IMR-90 (cell line): ENCODE measurements at regions of chr2 and their contacts with region 1.

Region 1: DNA sequence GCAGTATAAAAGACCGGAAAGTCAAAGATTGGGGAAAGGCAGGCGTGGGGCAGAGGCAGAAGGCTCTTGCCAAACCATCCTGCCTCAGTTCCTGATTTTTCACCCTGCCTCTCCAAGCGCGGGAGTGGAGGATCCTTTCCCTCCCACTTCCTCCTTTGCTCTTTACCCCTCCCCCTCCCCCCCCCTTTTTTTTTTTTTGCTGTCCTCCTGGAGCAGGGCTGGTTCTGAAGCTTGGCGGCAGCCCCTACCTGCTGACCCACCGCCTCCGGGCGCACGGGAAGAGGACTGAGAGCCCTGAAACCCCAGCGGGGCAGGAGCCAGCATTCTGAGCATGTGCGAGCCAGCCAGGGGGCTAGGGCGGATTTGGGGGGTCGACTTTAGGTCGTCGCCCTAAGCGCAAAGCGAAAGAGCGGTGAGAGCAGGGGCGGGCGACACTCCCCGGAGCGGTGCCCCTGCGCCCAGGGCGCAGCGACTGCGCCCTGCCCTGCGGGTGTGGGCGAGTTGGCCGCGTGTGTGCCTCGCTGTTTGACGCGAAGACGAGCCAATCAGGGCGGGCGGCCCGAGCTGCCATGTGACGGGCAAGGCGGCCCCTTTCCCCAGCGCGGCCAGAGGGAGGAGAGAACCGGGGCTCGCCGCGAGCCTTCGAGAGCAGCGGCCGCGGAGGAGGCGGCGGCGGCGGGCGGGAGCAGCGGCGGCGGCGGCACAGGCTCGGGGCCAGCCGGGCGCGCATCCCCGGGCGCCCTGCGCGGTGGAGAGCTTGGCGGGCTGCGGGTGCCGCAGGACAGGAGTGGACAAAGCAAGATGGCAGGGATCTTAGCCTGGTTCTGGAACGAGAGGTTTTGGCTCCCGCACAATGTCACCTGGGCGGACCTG is at the start of gene CERS6:
- DNase-seq: peak; percentile 90
- ATAC-seq: peak; percentile 99
- H3K4me3 ChIP-seq: peak within 1 kb of the TSS; percentile 83
- H3K27ac ChIP-seq: peak within 1 kb of the TSS; percentile 52
- H3K4me1 ChIP-seq: no peaks in the 10 kb centered on the region
- H3K27me3 ChIP-seq: peaks cover 2% of the 10 kb centered on the region; the same call in 1 of the 2 replicates
- CTCF ChIP-seq: no peak
- POLR2A ChIP-seq: peak; percentile 58; the same call in 1 of the 2 replicates
- RAD21 ChIP-seq: no peak
- total RNA-seq, gene CERS6: 5.7 and 9.4 TPM in 2 replicates

Region 2: GRCh38 chr2:168583064-168583709 is 127.3 kb after region 1 on chr2:
- CTCF ChIA-PET with region 1: no interaction called
- POLR2A ChIA-PET with region 1: no interaction called
- dilution Hi-C with region 1: no loop called
- in situ Hi-C with region 1: no loop called
- intact Hi-C with region 1: loop called (anchors 5 kb)
- DNase-seq: peak; percentile 43
- ATAC-seq: peak; percentile 43; the same call in 1 of the 2 replicates
- H3K4me3 ChIP-seq: no peak overlapping the region
- H3K27ac ChIP-seq: no peak overlapping the region; the same call in 1 of the 2 replicates
- H3K4me1 ChIP-seq: peaks cover 4% of the 10 kb centered on the region; the same call in 1 of the 2 replicates
- H3K27me3 ChIP-seq: no peaks in the 10 kb centered on the region
- CTCF ChIP-seq: no peak
- POLR2A ChIP-seq: no peak
- RAD21 ChIP-seq: no peak

Region 3: DNA sequence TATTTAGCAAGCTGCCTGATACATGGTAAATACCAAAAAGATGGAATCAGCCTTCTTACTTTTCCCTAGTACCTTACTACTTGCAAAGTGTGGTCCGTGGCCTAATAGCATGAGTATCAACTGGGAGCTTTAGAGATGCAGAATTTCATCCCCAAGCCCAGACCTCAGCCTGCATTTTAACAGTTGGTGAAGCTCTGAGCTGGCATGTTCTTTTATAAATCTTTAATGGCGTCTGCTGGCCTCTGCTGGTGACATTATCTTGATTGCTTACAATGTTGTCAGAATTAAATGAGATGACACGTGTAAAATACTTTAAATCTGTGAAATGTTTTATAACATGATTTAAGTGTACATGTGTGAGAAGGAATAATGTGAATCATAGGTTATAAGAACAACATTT is 231.4 kb after region 1 on chr2:
- CTCF ChIA-PET with region 1: no interaction called
- POLR2A ChIA-PET with region 1: no interaction called
- dilution Hi-C with region 1: no loop called
- in situ Hi-C with region 1: no loop called
- intact Hi-C with region 1: loop called (anchors 5 kb)
- DNase-seq: peak; percentile 2
- ATAC-seq: peak; percentile 56
- H3K4me3 ChIP-seq: no peak overlapping the region
- H3K27ac ChIP-seq: no peak overlapping the region
- H3K4me1 ChIP-seq: peaks cover 6% of the 10 kb centered on the region
- H3K27me3 ChIP-seq: no peaks in the 10 kb centered on the region
- CTCF ChIP-seq: no peak
- POLR2A ChIP-seq: no peak
- RAD21 ChIP-seq: peak; percentile 23; the same call in 1 of the 2 replicates

Region 4: DNA sequence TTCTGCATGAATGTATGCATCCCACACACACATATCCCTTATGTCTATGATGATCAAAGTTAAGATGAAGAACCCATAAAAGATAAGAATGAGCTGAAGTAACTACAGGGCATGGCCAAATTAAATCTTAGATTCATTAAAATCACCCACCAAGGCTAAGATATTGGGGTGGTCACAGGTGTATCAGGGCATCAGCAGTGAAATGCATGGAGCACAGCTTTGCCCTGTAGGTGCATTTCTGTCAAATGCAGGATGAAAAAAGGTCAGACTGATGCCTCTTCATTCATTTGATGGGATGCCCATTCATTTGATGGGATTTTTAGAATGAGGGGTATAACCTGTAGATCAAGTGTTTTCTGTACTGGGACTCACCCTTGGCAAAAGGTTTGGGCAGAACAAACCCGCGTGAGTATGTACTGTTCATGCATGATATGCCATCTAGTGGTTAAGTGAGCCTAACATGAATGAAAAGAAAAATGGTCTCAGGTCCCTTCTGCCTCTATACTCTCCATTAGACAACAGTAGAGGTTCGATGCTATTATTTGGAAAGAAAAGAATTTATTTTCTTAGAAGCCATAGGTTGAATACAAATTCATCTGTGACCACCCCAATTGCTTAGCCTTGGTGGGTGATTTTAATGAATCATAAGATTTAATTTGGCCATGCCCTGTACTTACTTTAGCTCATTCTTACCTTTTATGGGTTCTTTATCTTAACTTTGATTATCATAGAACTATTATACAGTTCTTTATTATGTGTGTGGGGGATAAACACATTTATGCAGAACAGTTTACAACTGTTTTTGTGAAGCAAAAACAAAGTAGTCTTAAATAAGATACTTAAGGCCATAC is 303.3 kb after region 1 on chr2:
- CTCF ChIA-PET with region 1: no interaction called
- POLR2A ChIA-PET with region 1: no interaction called
- dilution Hi-C with region 1: no loop called
- in situ Hi-C with region 1: no loop called
- intact Hi-C with region 1: loop called (anchors 10 kb)
- DNase-seq: peak; percentile 59
- ATAC-seq: peak; percentile 95
- H3K4me3 ChIP-seq: no peak overlapping the region
- H3K27ac ChIP-seq: no peak overlapping the region
- H3K4me1 ChIP-seq: no peaks in the 10 kb centered on the region
- H3K27me3 ChIP-seq: no peaks in the 10 kb centered on the region
- CTCF ChIP-seq: peak; percentile 62
- POLR2A ChIP-seq: no peak
- RAD21 ChIP-seq: peak; percentile 66